ENCODE measurements at regions of chr15 and their contacts with region 1.

Region 1: GRCh38 chr15:77543159-77543882 is 89.4 kb downstream of the LINGO1 start:
- DNase-seq: peak; percentile 86 to 93
- ATAC-seq: peak; percentile 94 to 98 (median 95)
- H3K4me3 ChIP-seq: peak overlapping the region; percentile 66
- H3K27ac ChIP-seq: peak overlapping the region; percentile 58
- H3K4me1 ChIP-seq: peaks cover 5% of the 10 kb centered on the region
- H3K27me3 ChIP-seq: no peaks in the 10 kb centered on the region
- CTCF ChIP-seq: peak; percentile 98

Region 2: GRCh38 chr15:77024271-77025082 is 518.8 kb before region 1 on chr15:
- intact Hi-C with region 1: loop called (anchors 2 to 5 kb)
- DNase-seq: peak; percentile 69 to 83
- ATAC-seq: peak; percentile 62 to 84 (median 70)
- H3K4me3 ChIP-seq: no peak overlapping the region
- H3K27ac ChIP-seq: no peak overlapping the region
- H3K4me1 ChIP-seq: no peaks in the 10 kb centered on the region
- H3K27me3 ChIP-seq: no peaks in the 10 kb centered on the region
- CTCF ChIP-seq: peak; percentile 98

Region 3: DNA sequence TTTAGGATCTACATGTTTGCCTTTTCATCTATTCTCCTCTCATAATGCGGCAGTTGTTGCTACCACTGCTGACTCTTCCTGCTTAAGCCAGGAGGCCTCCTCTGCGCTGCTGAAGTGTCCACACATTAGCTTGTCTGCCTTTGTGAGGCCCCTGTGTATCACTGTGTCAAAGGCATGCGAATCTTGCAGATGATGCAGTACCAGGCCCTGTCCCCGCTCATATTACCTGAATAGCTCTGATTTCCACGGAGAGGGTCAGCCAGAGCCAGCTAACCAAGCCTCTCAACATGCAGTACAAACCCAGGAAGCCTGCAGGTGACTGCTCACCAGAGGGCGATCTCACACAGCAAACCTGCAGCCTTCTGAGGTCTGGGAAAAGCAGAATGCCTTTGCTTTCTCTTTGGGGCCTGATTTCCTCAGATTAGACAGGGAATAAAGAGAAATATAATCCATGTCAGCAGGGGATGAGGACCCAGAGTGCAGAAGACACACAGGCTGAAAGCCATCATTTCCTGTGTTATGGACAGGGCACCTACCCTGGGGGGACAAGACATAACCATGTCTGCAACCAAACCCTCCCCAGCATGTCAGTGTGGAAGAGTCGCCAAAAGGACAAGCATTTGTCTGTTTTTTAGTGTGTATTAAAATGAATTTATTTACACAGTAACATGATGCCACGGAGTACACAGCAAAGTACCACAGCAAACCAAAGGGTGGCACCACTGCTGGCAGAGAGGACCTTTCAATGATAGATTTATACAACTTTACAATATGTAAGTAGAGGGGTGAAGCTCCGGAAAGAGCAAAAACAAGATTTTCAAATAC is 435.6 kb before region 1 on chr15:
- intact Hi-C with region 1: loop called (anchors 2 to 5 kb)
- DNase-seq: peak; percentile 47 to 73
- ATAC-seq: peak; percentile 85 to 94 (median 92)
- H3K4me3 ChIP-seq: no peak overlapping the region
- H3K27ac ChIP-seq: peak overlapping the region; percentile 56
- H3K4me1 ChIP-seq: peaks cover 22% of the 10 kb centered on the region
- H3K27me3 ChIP-seq: no peaks in the 10 kb centered on the region
- CTCF ChIP-seq: peak; percentile 73

Region 4: DNA sequence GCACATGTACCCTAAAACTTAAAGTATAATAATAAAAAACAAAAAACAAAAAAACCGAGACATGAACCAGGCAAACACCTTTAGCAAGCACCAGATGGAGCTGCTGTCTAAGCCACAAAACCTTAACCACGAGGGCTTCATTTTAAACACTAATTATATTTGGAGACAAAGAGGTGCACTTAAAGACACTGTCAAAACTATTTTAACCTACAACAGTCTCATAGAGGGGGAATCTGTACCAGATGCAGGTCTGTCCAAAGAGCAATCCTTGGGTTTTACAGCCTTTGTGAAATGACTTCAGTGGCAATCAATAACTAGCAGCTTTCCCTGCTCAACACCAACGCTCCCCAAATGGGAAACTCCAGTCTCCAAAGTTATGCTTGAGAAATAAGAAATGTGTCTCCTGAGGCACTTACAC is 356.7 kb before region 1 on chr15:
- intact Hi-C with region 1: loop called in 1 of 2 experiments (anchors 1 kb)
- DNase-seq: no peak
- ATAC-seq: peak in 2 of 4 donors; percentile 37 to 42
- H3K4me3 ChIP-seq: no peak overlapping the region
- H3K27ac ChIP-seq: peak overlapping the region; percentile 62
- H3K4me1 ChIP-seq: no peaks in the 10 kb centered on the region
- H3K27me3 ChIP-seq: no peaks in the 10 kb centered on the region
- CTCF ChIP-seq: peak; percentile 50